Activated T-helper 2 cell treated with anti-CD3 and anti-CD28 coated beads, Interferon-gamma antibody, Interleukin-2, Interleukin-4, amounts not matched to agents 10 μg/mL and 5 μg/mL and 100 μg/mL, durations not matched to agents 14 hours and 24 hours and 36 hours (primary cell): ENCODE measurements at regions of chr7 and their contacts with region 1.

Region 1: DNA sequence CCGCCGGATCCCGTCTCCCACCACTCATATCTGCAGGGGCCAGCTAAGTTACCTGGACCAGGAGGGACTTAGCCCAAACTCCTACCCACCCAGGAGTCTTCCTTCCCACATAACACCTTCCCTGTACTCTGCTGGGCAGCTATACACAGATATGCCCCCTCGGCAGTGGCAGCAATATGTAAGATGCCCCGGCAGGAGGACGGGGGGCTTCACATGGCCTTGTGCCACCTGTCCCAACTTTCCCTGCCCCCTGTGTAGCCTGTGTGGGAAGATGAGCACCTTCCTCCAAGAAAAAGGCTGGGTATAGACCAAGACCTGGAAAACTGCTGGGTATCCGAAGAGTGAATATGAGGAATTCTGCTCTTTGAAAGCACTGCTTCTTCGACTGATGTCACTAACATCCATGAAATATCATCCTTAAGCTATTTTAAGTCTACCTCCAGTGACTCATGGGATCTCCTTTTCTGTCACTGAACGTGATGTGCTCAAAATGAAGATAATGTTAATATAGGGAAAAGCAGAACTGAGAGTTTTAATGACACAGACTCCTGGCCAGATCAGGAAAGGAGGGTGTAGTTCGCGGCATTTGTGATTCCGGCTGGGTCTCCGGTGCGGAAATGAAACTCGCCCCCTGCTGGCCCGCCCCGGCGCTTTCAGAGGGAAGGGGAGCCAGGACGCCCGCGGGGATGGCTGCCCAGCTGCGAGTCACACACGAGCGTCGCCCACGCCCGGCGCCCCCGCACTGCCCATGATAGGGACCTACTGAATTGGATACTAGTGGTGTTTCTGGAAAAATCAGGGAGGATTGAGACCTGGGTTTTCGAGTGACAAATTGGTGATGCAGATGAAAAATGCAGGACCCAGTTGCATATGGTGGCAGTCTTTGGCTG is 256.9 kb upstream of the NFE2L3 start:
- DNase-seq: peak; percentile 53
- H3K4me3 Mint-ChIP-seq: peak overlapping the region; percentile 53
- H3K27ac Mint-ChIP-seq: no peak overlapping the region
- H3K4me1 Mint-ChIP-seq: peaks cover 31% of the 10 kb centered on the region
- H3K27me3 Mint-ChIP-seq: peaks cover 7% of the 10 kb centered on the region

Region 2: GRCh38 chr7:25951031-25951948 is 56.1 kb after region 1 on chr7:
- intact Hi-C with region 1: loop called (anchors 5 kb)
- DNase-seq: peak; percentile 90
- H3K4me3 Mint-ChIP-seq: peak overlapping the region; percentile 90
- H3K27ac Mint-ChIP-seq: peak overlapping the region; percentile 82
- H3K4me1 Mint-ChIP-seq: peaks cover 13% of the 10 kb centered on the region
- H3K27me3 Mint-ChIP-seq: peaks cover 16% of the 10 kb centered on the region

Region 3: GRCh38 chr7:26187380-26188205 is 292.4 kb after region 1 on chr7:
- intact Hi-C with region 1: loop called (anchors 5 kb)
- DNase-seq: no peak
- H3K4me3 Mint-ChIP-seq: no peak overlapping the region
- H3K27ac Mint-ChIP-seq: peak overlapping the region; percentile 83
- H3K4me1 Mint-ChIP-seq: peaks cover 73% of the 10 kb centered on the region
- H3K27me3 Mint-ChIP-seq: no peaks in the 10 kb centered on the region

Region 4: GRCh38 chr7:26500749-26501352 is 605.7 kb after region 1 on chr7:
- intact Hi-C with region 1: loop called (anchors 2 kb)
- DNase-seq: no peak
- H3K4me3 Mint-ChIP-seq: no peak overlapping the region
- H3K27ac Mint-ChIP-seq: no peak overlapping the region
- H3K4me1 Mint-ChIP-seq: no peaks in the 10 kb centered on the region
- H3K27me3 Mint-ChIP-seq: peaks cover 13% of the 10 kb centered on the region